GM13976 (cell line): ENCODE measurements at regions of chr2 and their contacts with region 1.

Region 1: GRCh38 chr2:120294008-120294340 is 41.3 kb downstream of the RALB start:
- DNase-seq: peak; percentile 71
- CTCF ChIP-seq: no peak

Region 2: DNA sequence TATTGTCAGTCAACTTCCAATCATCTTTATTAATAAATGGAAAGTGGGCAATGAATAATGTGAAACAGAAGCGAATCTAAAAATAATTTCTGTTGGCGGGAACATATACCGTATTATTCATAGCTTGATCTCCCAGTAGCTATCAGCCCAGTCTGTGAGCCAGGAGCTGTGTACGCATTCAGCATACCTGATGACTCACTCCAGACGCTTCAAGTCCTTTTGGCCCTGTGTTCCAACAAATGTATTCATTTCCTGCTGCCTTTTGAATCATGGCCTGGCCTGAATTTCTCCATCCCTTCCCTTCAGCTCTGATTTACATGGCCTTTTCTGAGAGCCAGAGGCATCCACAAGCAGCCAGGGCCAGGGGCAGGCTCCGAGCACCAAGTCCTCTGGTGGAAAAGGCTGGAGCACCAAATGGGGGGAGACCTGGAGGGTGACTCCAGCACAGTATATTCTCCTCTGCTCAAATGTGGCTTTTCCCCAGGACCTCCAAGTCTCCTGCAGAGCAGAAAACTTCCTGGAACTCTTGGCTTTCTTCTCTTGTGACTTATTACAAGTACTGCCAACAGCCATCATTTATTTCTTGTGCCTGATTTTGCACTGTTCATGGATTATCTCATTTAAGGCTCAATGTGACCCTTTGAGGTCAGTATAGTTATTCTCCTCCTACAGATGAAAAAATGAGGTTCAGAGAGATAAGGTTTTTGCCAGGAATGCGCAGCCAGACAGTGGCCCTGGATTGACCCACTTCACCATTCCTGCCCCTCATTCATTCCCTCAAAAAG is 1555.3 kb before region 1 on chr2:
- in situ Hi-C with region 1: no loop called
- DNase-seq: no peak
- CTCF ChIP-seq: no peak

Region 3: DNA sequence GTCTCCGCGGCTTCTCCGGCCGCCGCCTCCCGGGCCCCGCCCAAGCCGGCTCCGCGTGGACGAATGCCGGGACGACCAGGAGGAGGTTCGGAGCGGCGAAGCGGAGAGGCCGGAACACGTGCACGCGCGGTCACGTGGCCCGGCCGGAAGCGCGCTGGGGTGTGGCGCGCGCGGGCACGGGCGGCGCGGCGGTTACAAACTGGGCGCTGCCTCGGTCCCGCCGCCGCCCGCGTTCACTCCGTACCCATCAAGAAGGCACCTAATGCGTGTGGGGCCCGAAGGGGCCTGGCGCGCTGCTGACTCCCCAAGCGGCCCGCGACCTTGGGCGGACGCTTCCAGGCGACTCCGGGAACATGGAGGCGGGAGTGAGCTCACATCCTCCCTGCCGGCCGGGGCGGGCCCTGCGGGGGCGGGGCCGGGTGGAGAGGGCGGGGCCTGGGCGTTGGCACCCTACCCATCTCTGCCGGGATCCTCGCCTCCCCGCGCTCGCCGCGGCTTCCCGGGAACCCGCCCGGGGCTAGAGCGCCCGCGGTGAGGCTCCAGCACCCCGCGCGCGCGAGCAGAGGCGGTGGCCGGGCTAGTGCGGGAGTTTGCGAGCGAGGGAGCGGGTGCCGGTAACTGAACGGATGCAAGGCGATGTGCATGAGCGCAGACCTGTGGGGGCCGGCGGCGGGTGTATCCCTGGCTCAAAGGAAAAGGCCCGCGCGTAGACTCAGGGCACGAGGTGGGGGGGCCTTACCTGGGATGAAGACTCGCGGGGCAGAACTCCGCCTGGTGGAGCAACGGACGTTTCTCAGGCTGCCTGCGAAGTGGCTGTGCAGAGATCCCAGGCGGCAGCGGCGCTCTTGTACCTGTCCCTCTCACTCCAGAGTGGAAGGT is 70.7 kb before region 1 on chr2 and contains the start of gene TMEM185B:
- in situ Hi-C with region 1: loop called (anchors 10 kb)
- DNase-seq: peak; percentile 96
- CTCF ChIP-seq: no peak

Region 4: GRCh38 chr2:120257522-120257921 is 36.5 kb before region 1 on chr2:
- in situ Hi-C with region 1: loop called (anchors 5 kb)
- DNase-seq: no peak
- CTCF ChIP-seq: no peak